GM13977 (cell line): ENCODE measurements at regions of chr2 and their contacts with region 1.

Region 1: GRCh38 chr2:223993621-223994232 is 36.5 kb downstream of the MRPL44 start:
- DNase-seq: peak; percentile 71
- CTCF ChIP-seq: peak; percentile 86

Region 2: DNA sequence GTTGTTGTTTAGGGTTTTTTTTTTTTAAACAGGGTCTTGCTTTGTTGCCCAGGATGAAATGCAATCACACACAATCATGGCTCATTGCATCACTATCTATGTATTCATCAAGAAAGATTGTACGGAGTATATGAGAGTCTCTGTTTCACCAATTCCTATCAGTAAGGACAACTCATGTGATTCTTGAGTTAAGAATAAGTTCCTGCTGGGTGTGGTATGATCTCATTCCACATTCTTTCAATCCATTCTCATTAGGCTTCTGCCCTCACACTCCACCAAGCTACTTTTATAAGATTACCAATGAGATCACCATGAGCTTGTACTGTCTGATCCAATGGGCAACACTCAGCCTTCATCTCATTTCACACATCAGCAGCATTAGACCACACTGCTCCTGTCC is 147.2 kb before region 1 on chr2:
- in situ Hi-C with region 1: no loop called
- DNase-seq: no peak
- CTCF ChIP-seq: no peak

Region 3: DNA sequence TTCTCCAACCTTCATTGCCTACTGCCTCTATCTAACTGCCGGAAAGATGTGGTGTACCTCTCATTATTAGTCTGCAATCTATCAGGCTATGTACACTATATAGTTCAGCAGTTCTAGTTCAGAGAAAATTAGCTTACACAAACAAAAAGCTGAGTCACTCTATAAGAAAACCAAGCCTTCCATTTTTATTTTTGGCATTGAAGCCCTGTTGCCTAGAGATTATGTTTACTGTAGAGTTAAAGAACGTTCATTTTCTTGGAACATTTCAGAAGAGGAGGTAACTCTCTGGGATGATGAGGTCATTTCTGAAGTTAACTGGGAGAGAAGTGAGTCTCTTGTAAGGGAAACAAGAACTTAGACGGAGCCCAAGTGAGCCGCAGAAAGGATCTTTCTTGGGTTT is 274.7 kb after region 1 on chr2:
- in situ Hi-C with region 1: loop called (anchors 25 kb)
- DNase-seq: no peak
- CTCF ChIP-seq: no peak

Region 4: DNA sequence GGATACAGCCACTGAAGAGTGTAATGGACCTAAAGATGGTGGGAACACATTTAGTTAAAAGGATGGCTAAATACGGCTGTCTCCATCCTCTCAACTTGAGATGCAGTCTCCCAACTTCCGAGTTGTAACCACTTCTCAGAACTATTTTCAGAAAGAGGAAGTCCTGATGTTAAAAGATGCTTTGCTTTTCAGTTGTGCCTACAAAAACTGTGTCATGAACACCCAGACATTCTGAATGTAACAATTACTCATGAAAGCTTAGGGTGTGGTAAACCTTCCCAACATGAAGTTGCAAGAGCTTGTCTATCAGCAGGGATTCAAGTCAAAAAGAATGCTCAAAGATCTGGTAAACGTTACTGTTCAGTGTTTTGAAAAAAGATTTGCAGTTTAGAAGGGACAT is 900.6 kb after region 1 on chr2:
- in situ Hi-C with region 1: no loop called
- DNase-seq: peak; percentile 37
- CTCF ChIP-seq: no peak